Heart left ventricle (tissue), 16 donors: ENCODE measurements at regions of chr22 and their contacts with region 1.

Region 1: GRCh38 chr22:24350627-24351026 is 76.8 kb upstream of the ADORA2A start:
- DNase-seq: no peak
- ATAC-seq: peak in 1 of 4 donors; percentile 57
- H3K4me3 ChIP-seq: no peak overlapping the region
- H3K27ac ChIP-seq: no peak overlapping the region
- H3K4me1 ChIP-seq: peaks cover 0 to 30% (median 5%) of the 10 kb centered on the region in 12 donors
- H3K27me3 ChIP-seq: no peaks in the 10 kb centered on the region
- CTCF ChIP-seq: no peak
- POLR2A ChIP-seq: no peak

Region 2: DNA sequence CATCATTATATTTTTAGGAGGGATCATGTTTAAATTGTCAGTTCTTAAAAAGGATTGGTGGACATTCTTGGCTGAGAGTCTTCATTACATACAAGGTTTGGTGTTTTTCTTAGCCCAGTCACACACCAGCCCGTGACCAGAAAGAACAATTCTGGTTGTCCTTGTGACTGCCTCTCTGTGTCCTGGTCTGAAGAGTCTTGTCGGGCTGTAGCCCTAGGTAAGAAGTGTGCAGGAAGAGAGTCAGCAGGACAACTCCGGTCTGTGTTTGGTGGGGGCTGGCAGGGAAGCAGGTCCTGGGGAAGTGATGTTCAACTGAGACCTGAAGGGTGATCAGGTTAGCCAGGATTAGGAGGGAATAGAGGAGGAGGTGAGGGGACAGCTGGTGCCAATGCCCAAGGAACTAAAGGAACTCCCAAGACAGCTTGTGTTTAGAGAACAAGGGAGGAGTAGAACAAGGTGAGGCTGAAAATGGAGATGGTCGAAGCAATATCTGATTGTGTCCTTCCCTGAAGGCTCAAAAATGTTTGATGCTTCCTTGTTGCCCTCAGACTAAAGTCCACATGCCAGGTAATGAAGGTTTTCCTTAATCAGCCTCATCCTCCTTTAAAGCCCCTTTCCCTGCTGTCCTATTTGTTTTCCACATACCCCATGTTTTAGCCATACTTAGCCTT is 11.5 kb after region 1 on chr22:
- intact Hi-C with region 1: loop called in 1 of 10 experiments (anchors 1 kb)
- DNase-seq: no peak
- ATAC-seq: peak in 1 of 4 donors; percentile 32
- H3K4me3 ChIP-seq: no peak overlapping the region
- H3K27ac ChIP-seq: no peak overlapping the region
- H3K4me1 ChIP-seq: peaks cover 0 to 22% (median 12%) of the 10 kb centered on the region in 12 donors
- H3K27me3 ChIP-seq: no peaks in the 10 kb centered on the region
- CTCF ChIP-seq: no peak
- POLR2A ChIP-seq: no peak